H1 (cell line): ENCODE measurements at regions of chr10 and their contacts with region 1.

Region 1: DNA sequence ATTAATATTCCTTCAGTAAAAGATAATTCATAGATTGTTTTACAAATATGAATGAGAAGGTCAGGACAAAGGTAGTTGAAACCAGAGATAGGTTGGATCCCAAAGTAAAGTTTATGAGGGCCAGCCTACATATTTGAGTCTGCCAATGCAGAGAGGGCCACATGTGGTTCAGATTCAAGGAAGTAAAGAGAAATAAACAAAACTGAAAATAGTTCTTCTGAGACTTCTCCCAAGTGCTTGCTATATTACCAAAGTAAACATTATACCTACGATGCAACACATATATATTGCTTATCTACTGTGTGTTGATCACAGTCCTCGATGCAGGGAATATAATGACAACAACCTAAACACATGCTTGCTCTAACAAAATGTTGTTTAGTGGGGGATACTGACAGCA is 109.8 kb downstream of the MALRD1 start:
- DNase-seq: no peak
- H3K4me3 ChIP-seq: no peak overlapping the region
- H3K27ac ChIP-seq: no peak overlapping the region
- H3K4me1 ChIP-seq: no peaks in the 10 kb centered on the region
- H3K27me3 ChIP-seq: no peaks in the 10 kb centered on the region
- CTCF ChIP-seq: no peak
- EP300 ChIP-seq: no peak
- POLR2A ChIP-seq: no peak
- RAD21 ChIP-seq: no peak

Region 2: DNA sequence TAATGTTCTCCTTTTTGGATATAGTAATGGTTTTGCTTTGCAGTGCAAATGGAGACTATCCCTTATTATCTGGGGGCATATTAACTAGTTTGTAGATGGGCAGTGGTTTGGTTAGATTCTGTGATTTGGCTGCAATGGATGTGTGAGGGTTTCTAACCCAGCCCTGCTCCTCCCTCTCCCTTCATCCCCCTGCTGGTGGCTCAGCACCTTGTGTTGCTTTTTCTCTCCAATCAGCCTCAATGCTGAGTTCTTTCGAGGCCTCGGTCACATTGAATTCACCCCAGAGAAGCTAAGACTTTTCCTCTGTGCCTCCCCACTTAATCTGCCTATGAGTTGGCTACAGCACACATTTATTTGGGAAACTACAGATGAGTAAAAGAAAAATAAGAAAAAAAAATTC is 10.2 kb after region 1 on chr10:
- CTCF ChIA-PET with region 1: interaction called, 16 read pairs
- POLR2A ChIA-PET with region 1: no interaction called
- DNase-seq: peak in 1 of 2 experiments; percentile 47
- H3K4me3 ChIP-seq: no peak overlapping the region
- H3K27ac ChIP-seq: no peak overlapping the region
- H3K4me1 ChIP-seq: no peaks in the 10 kb centered on the region; a peak in 1 of 7 replicates
- H3K27me3 ChIP-seq: no peaks in the 10 kb centered on the region
- CTCF ChIP-seq: peak; percentile 62 to 77 (median 70)
- EP300 ChIP-seq: no peak
- POLR2A ChIP-seq: no peak
- RAD21 ChIP-seq: peak; percentile 69 to 70

Region 3: DNA sequence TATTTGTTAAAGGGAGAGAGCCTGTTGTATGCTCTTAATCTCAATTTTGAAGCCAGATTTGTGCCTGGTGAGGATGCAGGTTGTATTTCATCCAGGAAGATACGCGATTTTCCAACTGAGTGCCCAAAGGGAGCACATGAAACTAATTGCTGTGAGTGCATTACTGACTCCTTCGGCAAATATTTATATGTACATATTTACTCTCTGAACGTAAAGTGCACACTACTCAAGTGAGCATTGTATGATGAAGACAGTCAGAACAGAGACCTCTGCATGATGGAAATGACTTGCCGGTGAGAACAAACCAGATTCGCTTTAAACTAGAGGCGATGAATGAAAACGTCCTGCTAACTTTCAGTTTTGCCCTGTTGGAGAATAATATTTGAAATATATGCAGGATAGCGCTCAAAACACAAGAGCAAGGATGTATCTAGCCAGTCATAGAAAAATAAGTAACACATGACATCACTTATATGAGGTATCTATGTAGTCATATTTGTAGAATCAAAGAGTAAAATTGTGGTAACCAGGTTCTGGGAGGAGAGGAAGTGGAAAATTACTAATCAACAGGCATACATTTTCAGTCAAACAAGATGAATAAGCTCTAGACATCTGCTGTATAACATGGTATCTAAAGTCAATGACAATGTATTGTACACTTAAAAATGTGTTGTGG is 20.5 kb after region 1 on chr10:
- CTCF ChIA-PET with region 1: no interaction called
- POLR2A ChIA-PET with region 1: no interaction called
- DNase-seq: no peak
- H3K4me3 ChIP-seq: no peak overlapping the region
- H3K27ac ChIP-seq: no peak overlapping the region
- H3K4me1 ChIP-seq: no peaks in the 10 kb centered on the region
- H3K27me3 ChIP-seq: no peaks in the 10 kb centered on the region
- CTCF ChIP-seq: no peak
- EP300 ChIP-seq: no peak
- POLR2A ChIP-seq: no peak
- RAD21 ChIP-seq: no peak